ENCODE measurements at regions of chr11 and their contacts with region 1.

Region 1: GRCh38 chr11:34192481-34193401 is 87.3 kb downstream of the NAT10 start:
- DNase-seq: no peak
- H3K4me3 ChIP-seq: peak overlapping the region in 1 of 4 donors; percentile 19
- H3K27ac ChIP-seq: peak overlapping the region; percentile 23 to 79 (median 76)
- H3K4me1 ChIP-seq: peaks cover 6 to 20% (median 11%) of the 10 kb centered on the region in 3 donors
- H3K27me3 ChIP-seq: peaks cover 0 to 20% (median 0%) of the 10 kb centered on the region in 4 donors
- CTCF ChIP-seq: no peak
- POLR2A ChIP-seq: no peak

Region 2: DNA sequence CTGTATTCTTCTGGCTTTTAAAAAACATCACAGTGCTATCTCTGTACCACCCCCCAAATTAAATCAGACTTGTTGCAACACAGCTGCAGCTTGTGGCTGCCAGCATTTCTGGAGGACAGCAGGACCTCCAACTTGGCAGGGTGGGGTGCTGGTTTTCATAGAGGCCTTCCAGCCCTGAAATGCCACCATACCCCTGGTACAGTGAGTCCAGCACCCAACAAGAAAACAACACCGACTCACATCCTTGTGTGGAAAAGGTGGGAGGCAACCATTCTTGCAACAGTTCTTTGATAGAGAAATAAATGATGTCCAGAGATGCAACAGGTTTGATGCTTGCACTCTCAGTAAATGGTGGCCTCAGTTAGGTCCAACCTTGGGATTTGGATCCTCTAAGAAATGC is 69.1 kb after region 1 on chr11:
- intact Hi-C with region 1: no loop called
- DNase-seq: no peak
- H3K4me3 ChIP-seq: no peak overlapping the region
- H3K27ac ChIP-seq: no peak overlapping the region
- H3K4me1 ChIP-seq: peaks cover 3 to 23% (median 10%) of the 10 kb centered on the region in 3 donors
- H3K27me3 ChIP-seq: no peaks in the 10 kb centered on the region
- CTCF ChIP-seq: no peak
- POLR2A ChIP-seq: no peak

Region 3: GRCh38 chr11:34274723-34275401 is 82.1 kb after region 1 on chr11:
- intact Hi-C with region 1: loop called (anchors 10 kb)
- DNase-seq: no peak
- H3K4me3 ChIP-seq: no peak overlapping the region
- H3K27ac ChIP-seq: peak overlapping the region; percentile 50 to 81 (median 67)
- H3K4me1 ChIP-seq: peaks cover 10 to 19% (median 12%) of the 10 kb centered on the region in 3 donors
- H3K27me3 ChIP-seq: no peaks in the 10 kb centered on the region
- CTCF ChIP-seq: no peak
- POLR2A ChIP-seq: no peak

Measured in esophagus squamous epithelium (tissue), 5 donors.